ENCODE measurements at regions of chr12 and their contacts with region 1.

Region 1: GRCh38 chr12:92136965-92137721 is 8.5 kb downstream of the BTG1 start:
- DNase-seq: no peak
- ATAC-seq: peak; percentile 47
- H3K4me3 Mint-ChIP-seq: peak overlapping the region; percentile 99
- H3K27ac Mint-ChIP-seq: peak overlapping the region; percentile 94
- H3K4me1 Mint-ChIP-seq: peaks cover 67% of the 10 kb centered on the region
- H3K27me3 Mint-ChIP-seq: no peaks in the 10 kb centered on the region

Region 2: DNA sequence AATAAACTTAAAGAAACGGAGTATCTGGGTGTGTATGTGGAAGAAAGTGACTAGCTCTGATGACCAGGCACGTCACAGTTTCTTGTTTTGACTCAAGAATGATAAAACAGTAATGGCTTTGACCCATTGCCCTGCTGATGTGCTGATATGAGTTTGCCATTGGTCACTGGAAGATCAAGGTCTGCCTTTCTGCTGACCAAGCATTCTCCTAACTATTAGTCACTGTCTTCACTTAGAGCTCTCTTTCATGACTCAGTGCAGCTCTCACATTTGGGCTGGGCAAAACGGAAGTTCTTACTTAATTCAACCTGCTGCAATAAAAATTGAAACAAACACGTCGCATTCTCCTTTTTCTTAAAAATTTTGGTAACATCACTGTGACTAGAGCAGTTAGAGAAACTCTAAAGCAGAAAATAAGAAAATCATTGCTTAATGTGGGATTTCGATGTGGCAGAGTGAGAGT is 358.2 kb before region 1 on chr12:
- CTCF ChIA-PET with region 1: no interaction called
- POLR2A ChIA-PET with region 1: no interaction called
- intact Hi-C with region 1: loop called in 1 of 2 experiments (anchors 2 kb)
- DNase-seq: peak; percentile 63
- ATAC-seq: peak; percentile 91
- H3K4me3 Mint-ChIP-seq: peak overlapping the region; percentile 46
- H3K27ac Mint-ChIP-seq: peak overlapping the region; percentile 81
- H3K4me1 Mint-ChIP-seq: peaks cover 42% of the 10 kb centered on the region
- H3K27me3 Mint-ChIP-seq: no peaks in the 10 kb centered on the region

Region 3: GRCh38 chr12:92059976-92060375 is 77.2 kb before region 1 on chr12:
- CTCF ChIA-PET with region 1: interaction called, 4 read pairs
- POLR2A ChIA-PET with region 1: interaction called, 3 read pairs
- intact Hi-C with region 1: loop called (anchors 1 to 2 kb)
- DNase-seq: no peak
- ATAC-seq: no peak
- H3K4me3 Mint-ChIP-seq: peak overlapping the region; percentile 42
- H3K27ac Mint-ChIP-seq: peak overlapping the region; percentile 35
- H3K4me1 Mint-ChIP-seq: peaks cover 90% of the 10 kb centered on the region
- H3K27me3 Mint-ChIP-seq: no peaks in the 10 kb centered on the region

Region 4: DNA sequence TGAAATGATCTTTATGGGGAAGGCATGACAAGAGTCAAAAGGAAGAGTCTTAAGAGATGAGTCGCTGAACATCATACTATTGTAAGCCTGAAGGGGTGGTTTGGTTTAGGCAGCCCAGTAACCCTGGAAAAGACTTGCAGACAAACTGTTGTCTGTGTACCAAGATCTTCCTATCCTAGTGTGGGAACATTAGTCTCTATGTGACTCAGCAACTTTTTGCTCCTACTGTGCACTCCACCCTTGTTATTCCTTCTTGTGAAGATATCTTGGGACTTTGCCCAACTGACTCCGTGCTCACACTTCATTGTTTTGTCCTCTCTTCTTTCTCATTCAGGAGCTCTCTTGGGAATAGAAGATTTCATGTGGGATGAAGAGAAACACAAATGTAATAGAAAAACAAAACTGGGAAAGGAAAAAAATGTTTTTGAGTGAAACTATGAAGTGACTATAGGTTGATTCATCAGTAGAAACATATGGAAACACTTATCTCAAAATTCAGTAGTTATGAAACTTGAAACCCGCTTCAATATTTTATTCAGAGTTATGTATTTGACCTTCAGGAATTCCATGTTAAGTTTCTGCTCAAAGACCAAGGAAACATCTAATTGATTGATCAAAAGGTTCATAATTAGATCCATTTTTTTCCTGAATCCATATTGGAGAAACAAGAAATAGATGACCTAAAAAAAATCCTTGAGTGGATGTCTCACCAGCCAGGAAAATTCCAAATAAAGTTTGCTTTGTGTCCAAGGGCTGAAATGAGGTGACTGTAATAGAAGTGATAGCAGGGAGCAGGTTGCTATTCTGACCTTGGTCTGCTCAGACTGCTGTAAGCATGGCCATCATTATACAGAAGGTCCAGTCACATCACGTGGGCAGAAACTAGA is 58.7 kb before region 1 on chr12:
- CTCF ChIA-PET with region 1: no interaction called
- POLR2A ChIA-PET with region 1: no interaction called
- intact Hi-C with region 1: loop called in 1 of 2 experiments (anchors 1 kb)
- DNase-seq: peak; percentile 38
- ATAC-seq: peak; percentile 87
- H3K4me3 Mint-ChIP-seq: no peak overlapping the region
- H3K27ac Mint-ChIP-seq: peak overlapping the region; percentile 87
- H3K4me1 Mint-ChIP-seq: peaks cover 79% of the 10 kb centered on the region
- H3K27me3 Mint-ChIP-seq: no peaks in the 10 kb centered on the region

Region 5: GRCh38 chr12:92111256-92111655 is 25.9 kb before region 1 on chr12:
- CTCF ChIA-PET with region 1: no interaction called
- POLR2A ChIA-PET with region 1: interaction called, 4 read pairs
- intact Hi-C with region 1: loop called in 1 of 2 experiments (anchors 2 kb)
- DNase-seq: no peak
- ATAC-seq: no peak
- H3K4me3 Mint-ChIP-seq: peak overlapping the region; percentile 37
- H3K27ac Mint-ChIP-seq: peak overlapping the region; percentile 73
- H3K4me1 Mint-ChIP-seq: peaks cover 75% of the 10 kb centered on the region
- H3K27me3 Mint-ChIP-seq: no peaks in the 10 kb centered on the region

Measured in activated CD4-positive, alpha-beta T cell treated with anti-CD3 and anti-CD28 coated beads for 36 hours (primary cell).